WTC11 (cell line): ENCODE measurements at regions of chr3 and their contacts with region 1.

Region 1: GRCh38 chr3:109325657-109326056 is 9.3 kb upstream of the DPPA2 start:
- DNase-seq: no peak
- ATAC-seq: peak; percentile 32
- H3K4me3 Mint-ChIP-seq: no peak overlapping the region
- H3K27ac Mint-ChIP-seq: no peak overlapping the region; the same call in none of the 2 replicates
- H3K4me1 Mint-ChIP-seq: peaks cover 43% of the 10 kb centered on the region
- H3K27me3 Mint-ChIP-seq: no peaks in the 10 kb centered on the region
- CTCF ChIP-seq: no peak

Region 2: DNA sequence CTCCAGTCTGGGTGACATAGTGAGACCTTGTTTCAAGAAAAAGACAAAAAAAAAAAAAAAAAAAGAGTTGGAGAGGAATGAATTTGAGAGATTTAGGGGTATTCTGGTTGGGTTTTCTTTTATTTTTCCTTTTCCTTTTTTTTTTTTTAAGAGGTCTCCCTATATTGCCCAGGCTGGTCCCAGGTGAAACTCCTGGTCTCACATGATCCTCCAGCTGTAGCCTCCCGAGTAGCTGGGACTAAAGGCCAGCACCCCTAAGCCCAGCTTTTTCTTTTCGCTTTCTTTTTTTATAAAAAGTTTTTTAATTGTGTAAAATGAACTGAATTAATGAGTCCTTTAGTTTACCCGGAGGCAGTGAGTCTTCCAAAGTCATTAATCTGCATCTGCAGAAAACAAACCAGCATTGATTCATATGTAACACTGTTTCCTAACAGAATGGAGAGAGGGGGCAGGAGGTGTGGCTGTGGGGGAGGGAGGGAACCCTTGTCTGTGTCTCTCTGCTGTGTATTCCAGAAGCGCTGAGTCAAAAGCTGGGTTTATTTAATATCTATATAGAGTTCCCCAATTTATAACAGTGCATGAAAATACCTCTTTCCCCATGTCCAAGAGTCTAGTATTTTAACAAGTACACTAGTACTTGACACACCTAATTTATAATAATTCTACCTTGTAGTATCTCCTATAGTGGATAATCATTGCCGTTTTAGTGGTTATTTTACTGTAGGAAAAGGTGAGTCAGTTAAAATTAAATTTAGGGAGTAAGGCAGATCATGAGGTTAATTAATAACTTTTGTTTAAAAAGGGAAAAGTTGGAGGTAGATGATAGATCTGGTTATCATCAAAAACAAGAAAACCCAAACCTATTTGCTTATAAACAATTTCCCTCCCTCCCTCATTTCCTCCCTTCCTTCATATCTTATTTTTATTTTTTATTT is 14.3 kb after region 1 on chr3:
- CTCF ChIA-PET with region 1: no interaction called
- POLR2A ChIA-PET with region 1: interaction called, 10 read pairs
- DNase-seq: no peak
- ATAC-seq: peak; percentile 56
- H3K4me3 Mint-ChIP-seq: peak overlapping the region; percentile 89
- H3K27ac Mint-ChIP-seq: peak overlapping the region; percentile 98; the same call in 1 of the 2 replicates
- H3K4me1 Mint-ChIP-seq: peaks cover 29% of the 10 kb centered on the region
- H3K27me3 Mint-ChIP-seq: peaks cover 3% of the 10 kb centered on the region; the same call in 1 of the 2 replicates
- CTCF ChIP-seq: no peak